Head of caudate nucleus (tissue), 42 donors: ENCODE measurements at regions of chr11 and their contacts with region 1.

Region 1: DNA sequence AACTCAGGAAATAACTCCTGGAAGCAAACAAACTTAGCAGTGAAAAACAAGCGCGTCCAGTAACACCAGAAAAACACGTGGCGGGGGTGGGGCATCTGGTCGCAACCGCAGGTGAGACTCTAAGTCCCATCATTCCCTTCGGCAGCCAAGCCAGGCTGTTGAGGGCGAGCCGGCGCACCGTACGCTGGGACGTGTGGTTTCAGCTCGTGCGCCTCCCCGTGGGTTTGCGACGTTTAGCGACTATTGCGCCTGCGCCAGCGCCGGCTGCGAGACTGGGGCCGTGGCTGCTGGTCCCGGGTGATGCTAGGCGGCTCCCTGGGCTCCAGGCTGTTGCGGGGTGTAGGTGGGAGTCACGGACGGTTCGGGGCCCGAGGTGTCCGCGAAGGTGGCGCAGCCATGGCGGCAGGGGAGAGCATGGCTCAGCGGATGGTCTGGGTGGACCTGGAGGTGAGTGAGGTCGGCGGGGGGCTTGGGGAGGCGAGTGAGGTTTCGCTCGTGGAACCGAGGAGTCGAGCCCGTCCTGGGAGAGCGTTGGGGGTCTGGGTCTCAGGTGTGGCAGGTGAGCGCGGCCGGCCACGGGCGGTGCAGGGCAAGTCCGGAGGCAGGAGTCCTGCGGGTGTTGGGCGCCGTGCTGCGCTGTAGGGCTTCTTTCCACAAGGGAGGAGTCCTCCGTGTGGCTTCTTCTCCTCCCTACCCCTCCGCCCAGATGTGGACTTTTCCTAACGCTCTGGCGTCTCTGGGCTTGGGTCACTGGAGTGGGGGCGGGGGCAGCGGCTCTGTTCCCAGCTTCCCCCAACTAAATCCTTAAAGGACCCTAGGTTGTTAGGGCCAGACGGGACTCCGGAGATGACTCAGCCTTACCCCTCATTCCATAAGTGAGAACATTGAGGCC is at the start of gene REXO2:
- DNase-seq: peak; percentile 93 to 98 (median 97)

Region 2: DNA sequence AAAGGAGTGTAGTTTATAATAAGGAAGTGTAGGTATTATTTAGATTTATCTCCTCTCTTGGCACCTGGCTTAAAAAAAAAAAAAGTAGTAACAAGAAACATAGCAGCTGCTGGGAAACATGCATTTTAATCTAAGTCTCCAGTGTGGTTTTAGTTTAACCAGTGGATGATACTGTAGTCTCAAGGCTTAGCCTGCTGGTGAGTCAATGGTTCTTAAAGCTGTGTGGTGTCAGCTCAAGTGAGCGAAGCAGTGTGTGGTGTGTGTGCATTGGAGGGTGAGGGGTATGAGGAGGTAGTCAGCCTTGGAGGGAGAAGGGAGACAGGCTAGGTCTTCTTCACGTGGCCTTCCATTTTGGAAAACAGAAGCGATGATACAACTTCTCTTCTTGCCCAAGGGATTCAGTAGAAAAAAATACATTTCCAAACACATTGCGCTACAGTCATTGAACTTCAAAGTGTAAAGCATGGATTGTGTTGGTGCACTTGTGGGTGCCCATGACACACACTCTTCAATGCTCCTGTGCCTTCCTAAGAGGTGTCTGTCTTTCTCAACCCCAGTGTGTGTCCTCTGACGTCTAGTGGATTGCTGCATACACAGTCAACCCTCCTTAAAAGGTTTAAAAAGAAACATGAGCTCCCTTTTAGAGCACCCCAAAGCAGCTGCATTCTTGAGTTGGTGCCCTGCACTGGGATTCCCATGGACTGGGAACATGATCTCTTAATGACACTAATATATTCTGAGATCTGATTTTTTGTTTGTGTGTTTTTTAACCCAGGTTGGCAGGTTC is 339.9 kb before region 1 on chr11:
- intact Hi-C with region 1: no loop called
- DNase-seq: no peak

Region 3: DNA sequence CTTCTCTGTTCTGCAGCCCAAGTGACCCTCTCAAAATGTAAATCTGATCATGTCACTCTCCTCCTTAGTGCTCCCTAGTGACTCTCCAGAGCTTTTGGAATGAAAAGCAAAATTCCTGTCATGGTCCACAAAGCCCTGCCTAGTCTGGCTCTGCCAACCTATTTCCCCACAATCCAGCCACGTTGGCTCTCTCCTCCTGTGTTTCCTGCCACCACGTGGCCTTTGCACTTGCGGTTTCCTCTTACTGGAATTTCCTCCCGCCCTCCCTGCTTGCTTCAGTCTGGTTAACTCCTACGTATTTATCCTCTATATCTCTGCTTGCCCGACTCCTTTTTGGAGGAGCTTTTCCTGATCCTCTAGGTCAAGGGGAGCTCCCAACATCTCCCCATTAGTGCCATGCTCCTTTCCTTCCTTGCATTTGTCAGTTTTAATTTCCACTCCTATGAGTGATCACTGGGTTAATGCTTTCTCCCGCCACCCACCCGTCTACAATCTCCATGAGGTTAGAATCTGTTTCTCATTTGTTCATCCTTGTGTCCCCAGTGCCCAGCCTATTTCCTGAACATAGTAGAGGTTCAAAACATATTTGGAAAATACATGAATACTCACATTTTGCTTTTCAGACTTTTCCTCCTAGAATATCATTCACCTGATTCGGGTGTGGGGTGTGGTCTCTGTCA is 131.8 kb before region 1 on chr11:
- intact Hi-C with region 1: no loop called
- DNase-seq: no peak

Region 4: GRCh38 chr11:114340311-114341131 is 99.0 kb before region 1 on chr11:
- intact Hi-C with region 1: loop called (anchors 5 kb)
- DNase-seq: peak; percentile 6 to 76 (median 49)

Region 5: GRCh38 chr11:114400217-114400914 is 39.1 kb before region 1 on chr11 and contains the starts of genes C11orf71 and RBM7:
- intact Hi-C with region 1: loop called (anchors 5 kb)
- DNase-seq: peak; percentile 91 to 99 (median 96)